Activated CD4-positive, alpha-beta memory T cell treated with anti-CD3 and anti-CD28 coated beads for 36 hours (primary cell): ENCODE measurements at regions of chr16 and their contacts with region 1.

Region 1: GRCh38 chr16:11407047-11407982 is 62.1 kb downstream of the RMI2 start:
- DNase-seq: peak; percentile 75
- H3K4me3 Mint-ChIP-seq: no peak overlapping the region
- H3K27ac Mint-ChIP-seq: no peak overlapping the region
- H3K4me1 Mint-ChIP-seq: no peaks in the 10 kb centered on the region
- H3K27me3 Mint-ChIP-seq: no peaks in the 10 kb centered on the region

Region 2: DNA sequence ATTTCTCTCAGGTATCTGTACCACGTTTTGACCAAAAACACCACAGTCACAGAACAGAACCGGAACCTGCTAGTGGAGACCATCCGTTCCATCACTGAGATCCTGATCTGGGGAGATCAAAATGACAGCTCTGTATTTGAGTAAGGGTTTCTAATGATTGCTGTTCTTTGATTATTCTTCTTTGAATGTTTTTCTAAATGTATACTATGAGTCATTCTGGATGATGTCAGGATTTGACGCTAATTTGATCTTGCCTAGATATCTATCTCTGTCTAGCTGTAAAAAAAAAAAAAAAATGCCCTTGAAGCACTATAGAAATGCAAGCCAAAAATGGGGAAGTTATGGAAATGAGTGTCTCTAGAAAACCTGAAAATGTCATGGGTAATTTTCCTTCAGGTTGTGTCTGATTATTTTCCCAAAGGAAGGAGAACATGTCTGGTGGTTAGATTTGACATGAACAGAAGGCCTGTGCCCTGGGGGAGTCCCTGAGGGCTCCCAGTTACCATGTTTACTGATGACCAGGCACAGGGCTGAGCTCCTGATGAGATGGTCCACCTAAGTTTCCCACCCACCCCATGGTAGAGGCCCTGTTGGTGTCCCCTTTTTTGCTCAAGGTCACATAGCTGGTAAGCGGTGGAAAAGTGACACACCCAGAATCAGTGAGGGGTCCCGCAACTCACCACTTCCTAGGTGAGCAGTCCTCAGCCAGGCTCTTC is 449.4 kb before region 1 on chr16:
- CTCF ChIA-PET with region 1: interaction called, 13 read pairs
- POLR2A ChIA-PET with region 1: no interaction called
- intact Hi-C with region 1: loop called (anchors 1 kb)
- DNase-seq: peak; percentile 65
- H3K4me3 Mint-ChIP-seq: peak overlapping the region; percentile 7
- H3K27ac Mint-ChIP-seq: peak overlapping the region; percentile 87
- H3K4me1 Mint-ChIP-seq: peaks cover 73% of the 10 kb centered on the region
- H3K27me3 Mint-ChIP-seq: no peaks in the 10 kb centered on the region

Region 3: DNA sequence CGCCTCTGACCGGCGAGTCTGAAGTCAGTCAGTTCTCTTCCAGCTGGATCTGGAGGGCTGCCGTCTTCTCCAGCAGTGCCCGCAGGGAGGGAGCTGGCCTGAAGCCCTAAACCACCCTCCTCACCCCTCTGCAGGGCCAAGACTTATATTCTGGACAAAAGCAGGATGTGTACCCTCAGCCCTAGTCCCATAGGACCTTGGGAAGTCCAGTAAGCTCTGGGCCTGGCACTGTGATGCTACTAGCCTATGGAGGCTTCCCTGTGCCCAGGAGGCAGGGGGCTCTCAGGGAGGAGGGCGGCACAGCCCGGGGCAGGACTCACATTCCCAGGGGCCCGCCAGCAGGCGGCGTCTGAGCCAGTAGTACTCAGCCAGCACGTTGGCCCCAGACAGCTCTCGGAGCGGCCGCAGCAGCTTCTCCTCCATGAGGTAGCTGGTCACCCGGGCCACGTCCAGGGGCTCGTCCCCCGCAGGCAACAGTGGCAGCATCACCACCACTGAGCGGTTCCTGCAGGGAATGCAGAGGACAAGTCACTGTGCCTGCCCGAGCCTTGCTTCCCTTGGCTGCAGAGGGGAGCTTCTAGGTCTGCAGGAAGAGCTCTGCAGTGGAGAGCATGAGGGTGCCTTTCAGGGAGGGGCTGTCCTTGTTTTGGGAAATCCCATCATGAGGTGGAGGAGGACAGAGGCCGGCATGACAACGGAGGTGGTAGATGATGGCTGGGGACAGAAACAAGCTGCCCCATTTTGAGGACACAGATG is 20.3 kb before region 1 on chr16:
- CTCF ChIA-PET with region 1: interaction called, 31 read pairs
- POLR2A ChIA-PET with region 1: no interaction called
- intact Hi-C with region 1: no loop called
- DNase-seq: no peak
- H3K4me3 Mint-ChIP-seq: no peak overlapping the region
- H3K27ac Mint-ChIP-seq: no peak overlapping the region
- H3K4me1 Mint-ChIP-seq: peaks cover 2% of the 10 kb centered on the region
- H3K27me3 Mint-ChIP-seq: peaks cover 4% of the 10 kb centered on the region

Region 4: DNA sequence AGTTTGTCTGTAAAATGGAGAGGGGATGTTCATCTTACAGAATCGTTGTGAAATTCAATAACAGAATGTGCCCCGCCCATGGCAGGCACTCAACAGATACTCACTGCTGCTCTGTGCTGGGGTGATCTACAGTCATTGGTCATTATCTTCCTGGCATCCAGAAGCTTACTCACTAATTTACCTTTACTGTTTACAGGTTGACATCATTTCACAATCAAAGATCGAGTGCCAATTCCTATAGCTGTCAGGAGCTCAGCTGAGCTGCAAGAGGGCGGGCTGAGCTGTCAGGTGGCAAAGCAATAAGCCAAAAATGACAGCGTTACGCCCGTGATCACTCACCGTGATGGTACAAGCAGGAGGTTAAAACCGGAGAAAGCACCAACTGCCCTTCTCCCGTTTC is 128.2 kb after region 1 on chr16:
- CTCF ChIA-PET with region 1: interaction called, 8 read pairs
- POLR2A ChIA-PET with region 1: no interaction called
- intact Hi-C with region 1: loop called (anchors 5 kb)
- DNase-seq: no peak
- H3K4me3 Mint-ChIP-seq: no peak overlapping the region
- H3K27ac Mint-ChIP-seq: no peak overlapping the region
- H3K4me1 Mint-ChIP-seq: peaks cover 2% of the 10 kb centered on the region
- H3K27me3 Mint-ChIP-seq: no peaks in the 10 kb centered on the region

Region 5: GRCh38 chr16:11715246-11715947 is 308.1 kb after region 1 on chr16:
- CTCF ChIA-PET with region 1: interaction called, 14 read pairs
- POLR2A ChIA-PET with region 1: no interaction called
- intact Hi-C with region 1: loop called (anchors 10 kb)
- DNase-seq: no peak
- H3K4me3 Mint-ChIP-seq: no peak overlapping the region
- H3K27ac Mint-ChIP-seq: no peak overlapping the region
- H3K4me1 Mint-ChIP-seq: peaks cover 14% of the 10 kb centered on the region
- H3K27me3 Mint-ChIP-seq: no peaks in the 10 kb centered on the region

Region 6: DNA sequence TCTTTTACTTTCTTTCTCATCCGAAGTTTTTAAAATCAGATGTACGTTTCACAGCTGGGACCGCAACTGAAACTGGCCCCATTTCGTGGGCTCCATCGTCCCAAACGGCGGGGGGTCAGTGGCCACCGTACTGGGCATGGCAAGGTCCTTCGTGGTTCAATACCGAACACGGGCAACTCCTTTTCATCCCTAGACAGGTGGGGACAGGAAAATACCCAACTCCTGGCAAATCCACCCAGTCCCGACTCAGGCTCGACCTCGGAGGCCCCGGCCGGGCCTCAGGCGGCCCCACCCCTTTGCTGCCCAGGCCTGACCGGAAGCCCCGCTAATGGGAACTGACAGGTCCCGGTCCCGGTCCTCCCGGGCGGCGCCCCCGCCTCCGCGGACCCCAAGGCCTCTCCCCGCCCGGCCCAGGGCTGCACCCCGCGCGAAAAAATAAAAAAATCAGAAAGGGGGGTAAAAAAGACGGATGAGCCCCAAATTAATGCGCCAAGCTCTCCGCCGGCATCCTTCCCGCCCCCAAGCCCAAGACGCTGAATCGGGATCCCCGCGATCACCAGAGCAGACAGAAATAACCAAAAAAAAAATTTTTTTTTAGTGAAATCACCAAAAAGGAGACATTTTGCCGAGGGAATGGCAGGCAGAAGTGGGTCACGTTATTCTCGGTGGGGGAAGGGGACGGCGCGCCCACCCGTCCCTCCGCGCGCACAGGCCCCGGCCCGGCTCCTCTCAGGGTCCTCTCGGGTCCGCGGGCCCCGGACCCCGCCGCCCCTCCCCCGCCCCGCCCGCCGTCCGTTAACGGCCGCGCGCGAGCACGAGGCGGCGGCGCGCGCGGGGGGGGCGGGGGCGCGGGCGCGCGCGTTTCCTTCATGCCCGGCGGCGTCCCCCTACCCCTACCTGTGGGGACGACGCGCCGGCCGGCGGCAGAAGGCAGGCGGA is 389.2 kb after region 1 on chr16:
- CTCF ChIA-PET with region 1: no interaction called
- POLR2A ChIA-PET with region 1: no interaction called
- intact Hi-C with region 1: no loop called
- DNase-seq: peak; percentile 43
- H3K4me3 Mint-ChIP-seq: peak overlapping the region; percentile 85
- H3K27ac Mint-ChIP-seq: peak overlapping the region; percentile 91
- H3K4me1 Mint-ChIP-seq: peaks cover 73% of the 10 kb centered on the region
- H3K27me3 Mint-ChIP-seq: no peaks in the 10 kb centered on the region